ENCODE measurements at regions of chr22 and their contacts with region 1.

Region 1: GRCh38 chr22:37199103-37199759 is 11.2 kb upstream of the C1QTNF6 start:
- DNase-seq: peak; percentile 95 to 99 (median 96)
- H3K4me3 ChIP-seq: peak overlapping the region; percentile 47 to 90 (median 77)
- H3K27ac ChIP-seq: peak overlapping the region; percentile 84 to 99 (median 96)
- H3K27me3 ChIP-seq: no peaks in the 10 kb centered on the region
- CTCF ChIP-seq: peak; percentile 83 to 100 (median 98)

Region 2: GRCh38 chr22:36775964-36776669 is 423.1 kb before region 1 on chr22 and contains the start of gene IFT27:
- intact Hi-C with region 1: loop called in 1 of 2 experiments (anchors 5 kb)
- DNase-seq: peak; percentile 94 to 100 (median 100)
- H3K4me3 ChIP-seq: peak within 1 kb of the TSS; percentile 59 to 100 (median 94)
- H3K27ac ChIP-seq: peak within 1 kb of the TSS; percentile 7 to 97 (median 89)
- H3K27me3 ChIP-seq: no peaks in the 10 kb centered on the region
- CTCF ChIP-seq: peak in 21 of 56 donors; percentile 7 to 57 (median 32)
- total RNA-seq, gene IFT27: 29.3 to 64.1 (median 43.9) TPM

Region 3: DNA sequence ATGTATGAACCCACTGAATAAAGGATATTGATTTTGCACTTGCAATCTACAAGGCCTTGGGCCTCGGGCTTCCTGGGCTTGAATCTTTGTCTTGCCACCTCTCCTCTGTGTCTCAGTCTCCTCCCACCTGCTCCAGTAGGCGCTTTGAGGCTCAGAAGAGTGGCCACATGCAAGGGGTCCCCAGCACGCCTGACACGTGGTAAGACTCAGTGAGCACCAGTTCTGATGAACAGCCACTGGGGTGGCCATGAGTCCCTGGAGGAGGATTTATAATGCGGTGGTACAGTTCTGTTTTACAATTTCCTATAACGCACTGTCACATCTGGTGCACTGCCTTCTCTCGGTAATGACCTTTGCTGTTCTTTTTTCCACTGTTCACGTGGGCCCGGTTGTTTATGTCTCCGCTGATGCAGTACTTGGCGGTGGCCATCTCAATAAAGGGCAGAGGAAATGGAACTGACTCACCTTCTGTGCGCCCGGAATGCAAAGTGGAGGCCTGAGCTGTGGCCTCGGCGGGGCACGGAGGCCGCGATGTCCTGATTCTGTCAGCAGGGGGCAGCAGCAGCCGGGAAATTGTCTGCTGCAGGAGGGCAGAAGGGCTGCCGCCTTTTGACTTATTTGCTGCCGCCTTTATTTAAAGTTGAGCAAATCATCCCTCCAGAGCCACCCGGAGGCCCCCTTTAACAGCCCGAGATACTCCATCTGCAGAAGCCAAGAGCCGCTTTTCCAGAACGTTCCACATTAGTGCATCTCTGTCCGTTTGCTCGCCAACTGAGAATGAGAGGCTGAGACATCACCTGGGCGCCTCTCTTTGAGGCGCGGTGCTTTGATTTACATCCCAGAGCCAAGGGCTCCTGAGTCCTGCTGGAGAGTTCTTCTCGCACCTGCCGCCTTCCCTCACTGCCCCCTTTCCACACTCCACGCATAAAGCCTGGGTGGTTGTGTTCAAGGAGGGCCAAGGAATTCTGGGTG is 417.3 kb before region 1 on chr22:
- intact Hi-C with region 1: loop called (anchors 2 to 5 kb)
- DNase-seq: peak; percentile 61 to 85 (median 73)
- H3K4me3 ChIP-seq: peak overlapping the region in 1 of 59 donors; percentile 5
- H3K27ac ChIP-seq: peak overlapping the region in 2 of 59 donors; percentile 40 to 48
- H3K27me3 ChIP-seq: peaks cover 0 to 11% (median 0%) of the 10 kb centered on the region in 45 donors
- CTCF ChIP-seq: peak; percentile 71 to 99 (median 95)

Region 4: GRCh38 chr22:36856121-36856791 is 343.0 kb before region 1 on chr22:
- intact Hi-C with region 1: loop called in 1 of 2 experiments (anchors 10 kb)
- DNase-seq: peak; percentile 82 to 93 (median 89)
- H3K4me3 ChIP-seq: peak overlapping the region in 6 of 59 donors; percentile 2 to 30 (median 22)
- H3K27ac ChIP-seq: no peak overlapping the region
- H3K27me3 ChIP-seq: peaks cover 0 to 5% (median 0%) of the 10 kb centered on the region in 45 donors
- CTCF ChIP-seq: peak; percentile 98 to 100 (median 100)

Region 5: GRCh38 chr22:37019309-37020125 is 179.7 kb before region 1 on chr22 and contains the starts of genes MPST and TST:
- intact Hi-C with region 1: loop called in 1 of 2 experiments (anchors 10 kb)
- DNase-seq: peak; percentile 48 to 87 (median 77)
- H3K4me3 ChIP-seq: peak within 1 kb of the TSS; percentile 64 to 98 (median 88)
- H3K27ac ChIP-seq: peak within 1 kb of the TSS; percentile 66 to 98 (median 93)
- H3K27me3 ChIP-seq: no peaks in the 10 kb centered on the region
- CTCF ChIP-seq: peak in 12 of 56 donors; percentile 5 to 30 (median 14)
- total RNA-seq, gene MPST: 12.8 to 46.5 (median 22.4) TPM
- total RNA-seq, gene TST: 8.8 to 40.3 (median 19.7) TPM

Region 6: DNA sequence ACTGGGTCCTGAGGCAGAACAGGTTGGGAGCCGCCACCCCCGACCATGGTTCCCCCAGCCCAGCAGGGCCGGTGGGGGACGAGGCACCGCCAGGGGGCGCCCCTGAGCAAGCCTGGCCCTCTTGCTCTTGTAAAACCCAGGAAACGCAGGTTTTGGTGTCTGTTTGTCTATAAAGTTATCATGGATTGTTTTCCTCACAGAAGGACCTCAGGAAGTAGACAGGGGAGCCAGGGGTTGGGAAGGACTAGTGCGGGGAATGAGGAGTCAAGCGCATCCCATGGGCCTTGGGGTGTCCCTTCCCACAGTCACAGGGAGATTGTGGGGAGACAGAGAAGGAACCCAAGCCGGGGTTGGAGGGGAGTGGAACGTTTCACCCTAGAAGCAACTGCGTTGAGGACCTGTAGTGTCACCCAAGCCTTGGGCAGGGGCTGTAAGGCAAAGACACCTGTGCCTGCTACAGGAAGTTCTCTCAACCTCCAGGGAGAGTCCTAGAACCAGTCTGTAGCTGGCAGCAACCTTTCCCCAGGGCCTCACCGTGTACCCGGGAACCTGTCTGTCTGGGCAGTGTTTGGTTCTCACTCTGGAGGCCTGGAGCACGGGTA is 121.2 kb before region 1 on chr22:
- intact Hi-C with region 1: loop called (anchors 5 kb)
- DNase-seq: peak in 5 of 10 donors; percentile 12 to 69 (median 39)
- H3K4me3 ChIP-seq: no peak overlapping the region
- H3K27ac ChIP-seq: no peak overlapping the region
- H3K27me3 ChIP-seq: peaks cover 0 to 16% (median 0%) of the 10 kb centered on the region in 45 donors
- CTCF ChIP-seq: peak; percentile 63 to 93 (median 85)

Region 7: GRCh38 chr22:37126882-37127281 is 72.3 kb before region 1 on chr22:
- intact Hi-C with region 1: no loop called
- DNase-seq: no peak
- H3K4me3 ChIP-seq: no peak overlapping the region
- H3K27ac ChIP-seq: no peak overlapping the region
- H3K27me3 ChIP-seq: peaks cover 0 to 2% (median 0%) of the 10 kb centered on the region in 45 donors
- CTCF ChIP-seq: peak in 3 of 56 donors; percentile 7 to 16 (median 16)

Region 8: DNA sequence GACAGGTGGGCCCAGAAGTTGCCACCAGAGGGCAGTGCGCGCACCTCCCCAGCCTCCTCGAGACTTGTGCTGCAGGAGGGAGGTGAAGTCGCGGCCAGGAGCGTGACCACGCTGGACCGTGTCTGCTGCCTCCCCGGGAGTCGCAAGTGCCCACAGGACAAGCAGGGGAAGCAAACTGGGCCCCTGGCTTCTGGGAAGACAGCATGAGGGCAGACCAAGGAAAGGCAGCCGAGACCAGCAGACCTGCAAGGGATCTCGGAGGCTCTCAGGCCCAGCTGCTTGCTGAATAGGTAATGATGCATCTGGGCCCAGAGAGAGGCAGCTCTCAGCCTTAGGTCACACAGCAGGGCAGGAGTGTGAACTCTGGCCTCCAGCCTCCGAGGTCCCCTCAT is 32.6 kb before region 1 on chr22:
- intact Hi-C with region 1: loop called (anchors 1 kb)
- DNase-seq: peak; percentile 75 to 88 (median 85)
- H3K4me3 ChIP-seq: peak overlapping the region in 54 of 59 donors; percentile 8 to 60 (median 40)
- H3K27ac ChIP-seq: peak overlapping the region in 8 of 59 donors; percentile 21 to 75 (median 50)
- H3K27me3 ChIP-seq: no peaks in the 10 kb centered on the region
- CTCF ChIP-seq: peak; percentile 79 to 96 (median 90)

Measured in dorsolateral prefrontal cortex (tissue), 120 donors.